ENCODE measurements at regions of chr19 and their contacts with region 1.

Region 1: GRCh38 chr19:48203732-48204628 is 33.5 kb downstream of the ZSWIM9 start:
- DNase-seq: peak; percentile 98
- ATAC-seq: peak; percentile 98
- H3K4me3 Mint-ChIP-seq: no peak overlapping the region
- H3K27ac Mint-ChIP-seq: no peak overlapping the region
- H3K4me1 Mint-ChIP-seq: no peaks in the 10 kb centered on the region
- H3K27me3 Mint-ChIP-seq: no peaks in the 10 kb centered on the region; the same call in 1 of the 2 replicates
- CTCF ChIP-seq: no peak

Region 2: GRCh38 chr19:48170038-48170812 is 33.8 kb before region 1 on chr19 and contains the starts of genes LIG1 and ZSWIM9:
- CTCF ChIA-PET with region 1: interaction called, 15 read pairs
- POLR2A ChIA-PET with region 1: interaction called, 13 read pairs
- DNase-seq: peak; percentile 91
- ATAC-seq: peak; percentile 82
- H3K4me3 Mint-ChIP-seq: peak within 1 kb of the TSS; percentile 91
- H3K27ac Mint-ChIP-seq: peak within 1 kb of the TSS; percentile 99
- H3K4me1 Mint-ChIP-seq: peaks cover 16% of the 10 kb centered on the region
- H3K27me3 Mint-ChIP-seq: no peaks in the 10 kb centered on the region
- CTCF ChIP-seq: no peak
- total RNA-seq, gene LIG1: 99.8 to 119 TPM (median 102 TPM) in 3 replicates
- total RNA-seq, gene ZSWIM9: 12.8 to 15.9 TPM (median 15.7 TPM) in 3 replicates

Region 3: DNA sequence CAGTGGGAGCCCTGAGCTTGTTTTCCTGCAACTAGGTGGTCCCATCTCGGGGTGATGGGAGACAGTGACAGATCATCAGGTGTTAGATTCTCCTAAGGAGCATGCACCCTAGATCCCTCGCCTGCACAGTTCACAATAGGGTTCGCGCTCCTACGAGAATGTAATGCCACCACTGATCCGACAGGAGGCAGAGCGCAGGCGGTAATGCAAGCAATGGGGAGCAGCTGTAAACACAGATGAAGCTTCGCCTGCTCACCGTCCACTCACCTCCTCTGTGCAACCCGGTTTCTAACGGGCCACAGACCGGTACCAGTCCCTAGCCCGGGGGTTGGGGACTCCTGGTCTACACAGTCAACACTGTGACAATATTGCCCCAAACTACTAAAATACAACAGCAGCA is 13.0 kb after region 1 on chr19:
- CTCF ChIA-PET with region 1: interaction called, 36 read pairs
- POLR2A ChIA-PET with region 1: no interaction called
- DNase-seq: peak; percentile 71
- ATAC-seq: peak; percentile 84
- H3K4me3 Mint-ChIP-seq: no peak overlapping the region
- H3K27ac Mint-ChIP-seq: no peak overlapping the region
- H3K4me1 Mint-ChIP-seq: peaks cover 7% of the 10 kb centered on the region
- H3K27me3 Mint-ChIP-seq: no peaks in the 10 kb centered on the region
- CTCF ChIP-seq: peak; percentile 61

Region 4: GRCh38 chr19:48255376-48256303 is 51.7 kb after region 1 on chr19 and contains the start of gene CARD8:
- CTCF ChIA-PET with region 1: interaction called, 20 read pairs
- POLR2A ChIA-PET with region 1: no interaction called
- DNase-seq: peak; percentile 69
- ATAC-seq: peak; percentile 86
- H3K4me3 Mint-ChIP-seq: peak within 1 kb of the TSS; percentile 96
- H3K27ac Mint-ChIP-seq: peak within 1 kb of the TSS; percentile 98
- H3K4me1 Mint-ChIP-seq: peaks cover 11% of the 10 kb centered on the region
- H3K27me3 Mint-ChIP-seq: peaks cover 7% of the 10 kb centered on the region
- CTCF ChIP-seq: no peak
- total RNA-seq, gene CARD8: 23.0 to 31.1 TPM (median 29.8 TPM) in 3 replicates

Measured in WTC11 (cell line).